ENCODE measurements at regions of chr6 and their contacts with region 1.

Region 1: DNA sequence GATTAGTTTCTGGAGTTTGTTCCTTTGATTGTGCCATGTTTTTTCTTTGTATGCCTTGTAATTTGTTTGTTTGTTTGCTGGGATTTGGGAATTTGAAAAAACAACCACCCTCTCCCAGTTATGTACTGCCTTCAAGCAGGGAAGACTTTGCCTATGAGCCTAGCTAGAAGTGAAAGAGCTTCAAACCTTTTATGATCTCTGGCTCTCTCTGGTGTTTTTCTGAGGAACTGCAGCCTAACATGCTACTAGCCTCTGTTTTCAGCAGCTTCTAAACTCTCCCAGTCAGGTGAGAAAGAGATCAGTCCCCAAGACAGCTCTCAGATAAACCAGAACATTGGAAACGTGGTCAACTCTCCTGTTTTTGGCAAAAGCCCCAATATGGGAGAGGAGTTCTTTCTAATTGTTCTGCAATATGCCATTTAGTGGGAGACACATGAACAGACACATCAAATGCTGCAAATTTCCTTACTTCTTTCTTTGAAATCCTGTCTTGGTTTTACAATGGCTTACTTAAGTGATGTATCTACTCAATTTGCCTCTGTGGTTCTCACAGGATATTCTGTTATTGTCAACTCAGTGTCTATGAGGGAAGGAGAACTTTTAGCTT is 58.9 kb upstream of the SERINC1 start:
- DNase-seq: peak; percentile 69
- ATAC-seq: peak; percentile 95
- H3K4me3 Mint-ChIP-seq: no peak overlapping the region
- H3K27ac Mint-ChIP-seq: no peak overlapping the region
- H3K4me1 Mint-ChIP-seq: no peaks in the 10 kb centered on the region
- H3K27me3 Mint-ChIP-seq: peaks cover 10% of the 10 kb centered on the region
- CTCF ChIP-seq: peak; percentile 87

Region 2: GRCh38 chr6:122381497-122382265 is 148.9 kb before region 1 on chr6:
- CTCF ChIA-PET with region 1: interaction called, 103 read pairs
- POLR2A ChIA-PET with region 1: no interaction called
- intact Hi-C with region 1: loop called (anchors 1 kb)
- DNase-seq: peak; percentile 75
- ATAC-seq: peak; percentile 94
- H3K4me3 Mint-ChIP-seq: no peak overlapping the region
- H3K27ac Mint-ChIP-seq: no peak overlapping the region
- H3K4me1 Mint-ChIP-seq: peaks cover 4% of the 10 kb centered on the region
- H3K27me3 Mint-ChIP-seq: peaks cover 4% of the 10 kb centered on the region
- CTCF ChIP-seq: peak; percentile 72

Region 3: DNA sequence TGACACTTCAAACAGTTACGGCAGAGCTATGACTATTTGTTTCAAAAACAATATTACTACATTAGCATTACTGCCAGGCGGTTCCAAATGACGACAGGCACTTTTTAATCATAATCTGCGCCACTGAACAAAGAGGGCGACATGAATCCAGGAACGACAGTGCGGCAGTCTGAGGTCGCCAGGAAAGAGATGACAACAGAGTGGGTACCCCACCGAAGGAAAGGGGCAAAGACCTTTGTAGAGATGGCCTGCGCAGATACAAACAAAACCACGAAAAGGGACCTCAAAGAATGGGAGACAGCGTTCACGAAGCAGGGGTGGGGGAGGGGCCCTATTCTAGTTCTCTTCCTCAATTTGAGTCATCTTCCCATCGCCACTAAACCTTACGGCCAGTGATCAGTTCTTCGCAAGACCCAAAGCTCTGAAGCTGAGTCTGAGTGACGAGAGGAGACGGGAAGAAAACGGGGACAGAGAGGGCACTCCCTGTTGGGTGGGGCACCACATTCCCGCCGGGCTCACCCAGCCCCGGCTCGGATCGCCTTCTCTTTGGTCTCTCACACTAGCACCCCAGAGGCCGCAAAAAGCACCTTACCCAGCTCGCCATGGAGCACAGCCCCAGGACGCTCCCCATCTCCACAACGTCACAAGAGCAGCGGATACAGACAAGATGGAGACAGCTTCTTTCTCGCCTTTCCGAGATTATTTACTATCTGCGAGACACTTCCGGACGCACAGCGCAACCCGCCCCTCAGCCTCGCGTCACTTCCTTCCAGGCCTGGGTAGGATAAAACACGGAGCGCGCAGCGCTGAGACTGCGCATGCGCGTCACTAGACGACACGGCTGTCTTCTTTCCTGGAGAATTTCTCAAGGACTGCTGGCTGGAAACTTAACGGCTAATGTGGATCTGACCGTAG is 59.2 kb before region 1 on chr6 and contains the start of gene SERINC1:
- CTCF ChIA-PET with region 1: interaction called, 31 read pairs
- POLR2A ChIA-PET with region 1: no interaction called
- intact Hi-C with region 1: loop called (anchors 2 kb)
- DNase-seq: peak; percentile 96
- ATAC-seq: peak; percentile 98
- H3K4me3 Mint-ChIP-seq: peak within 1 kb of the TSS; percentile 94
- H3K27ac Mint-ChIP-seq: peak within 1 kb of the TSS; percentile 98
- H3K4me1 Mint-ChIP-seq: peaks cover 36% of the 10 kb centered on the region
- H3K27me3 Mint-ChIP-seq: no peaks in the 10 kb centered on the region
- CTCF ChIP-seq: no peak
- total RNA-seq, gene SERINC1: 40.2 to 40.5 TPM

Region 4: DNA sequence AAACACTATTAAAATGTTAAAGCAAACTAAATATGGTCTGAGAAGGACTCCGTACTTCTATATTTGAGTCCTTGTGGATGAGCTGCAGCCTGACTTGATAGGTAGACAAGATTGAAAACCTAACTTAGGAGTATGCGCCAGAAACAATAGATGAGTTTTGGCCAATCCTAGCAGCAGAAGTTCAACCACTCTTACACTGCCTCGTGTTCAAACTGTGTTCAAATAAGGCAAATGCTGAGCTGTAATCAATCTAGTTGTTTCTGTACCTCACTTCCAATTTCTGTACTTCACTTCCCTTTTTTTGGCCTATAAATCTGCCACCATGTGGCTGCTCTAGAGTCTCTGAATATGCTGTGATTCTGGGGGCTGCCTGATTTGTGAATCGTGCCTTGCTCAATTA is 45.8 kb before region 1 on chr6:
- CTCF ChIA-PET with region 1: interaction called, 242 read pairs
- POLR2A ChIA-PET with region 1: no interaction called
- intact Hi-C with region 1: no loop called
- DNase-seq: no peak
- ATAC-seq: no peak
- H3K4me3 Mint-ChIP-seq: no peak overlapping the region
- H3K27ac Mint-ChIP-seq: no peak overlapping the region
- H3K4me1 Mint-ChIP-seq: no peaks in the 10 kb centered on the region
- H3K27me3 Mint-ChIP-seq: no peaks in the 10 kb centered on the region
- CTCF ChIP-seq: no peak

Region 5: DNA sequence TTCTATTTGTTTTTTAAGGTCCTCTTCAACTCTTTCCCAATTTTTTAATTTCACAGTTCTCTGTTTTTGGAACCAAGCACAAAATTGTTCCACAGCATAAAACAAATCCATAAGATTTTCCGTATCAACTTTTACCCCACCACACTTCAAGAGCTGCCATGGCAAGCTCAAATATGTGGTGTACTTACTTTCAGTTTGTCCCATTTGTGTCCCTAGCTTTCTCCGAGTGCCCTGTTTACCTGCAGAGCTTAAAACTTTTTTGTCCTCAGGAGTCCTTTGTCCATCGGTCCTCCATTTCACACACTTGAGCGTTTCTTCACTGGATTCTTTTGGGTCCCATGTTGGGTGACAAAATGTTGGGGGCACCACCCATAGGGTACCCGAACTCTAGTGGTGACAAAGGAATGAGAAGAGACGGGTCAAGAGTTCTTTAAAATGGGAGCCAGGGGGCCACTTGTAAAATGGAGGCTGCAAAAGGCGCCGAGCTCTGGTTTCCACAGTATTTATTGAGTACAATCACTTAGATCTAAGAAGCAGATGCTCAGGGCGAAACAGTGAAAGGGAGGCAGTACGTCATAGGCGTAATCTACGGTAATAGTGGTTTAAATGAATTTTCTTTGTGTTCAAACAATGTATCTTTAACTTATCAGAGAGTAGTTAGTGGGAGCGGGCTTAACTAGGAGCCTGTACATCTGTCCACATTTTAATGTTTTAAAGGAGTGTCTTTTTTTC is 19.2 kb before region 1 on chr6:
- CTCF ChIA-PET with region 1: interaction called, 17 read pairs
- POLR2A ChIA-PET with region 1: no interaction called
- intact Hi-C with region 1: no loop called
- DNase-seq: no peak
- ATAC-seq: no peak
- H3K4me3 Mint-ChIP-seq: no peak overlapping the region
- H3K27ac Mint-ChIP-seq: no peak overlapping the region
- H3K4me1 Mint-ChIP-seq: no peaks in the 10 kb centered on the region
- H3K27me3 Mint-ChIP-seq: no peaks in the 10 kb centered on the region
- CTCF ChIP-seq: no peak

Region 6: DNA sequence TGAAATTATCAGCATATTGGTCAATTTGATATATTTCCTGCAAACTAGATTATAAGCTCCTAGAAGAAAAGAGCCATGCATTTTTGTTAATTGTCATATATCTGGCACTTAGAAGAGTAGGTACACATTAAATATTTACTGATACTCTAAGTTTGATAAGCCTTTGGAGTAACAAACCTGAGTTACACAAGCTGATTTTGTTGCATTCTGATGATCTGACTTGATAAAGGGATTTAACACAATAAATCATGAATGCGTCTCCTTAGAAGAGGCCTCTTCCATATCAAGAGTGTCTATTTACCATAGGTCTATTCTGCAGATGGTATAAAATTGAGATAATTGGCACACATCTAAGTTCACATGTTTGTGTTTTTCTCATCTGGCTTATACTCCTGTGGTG is 10.4 kb before region 1 on chr6:
- CTCF ChIA-PET with region 1: interaction called, 27 read pairs
- POLR2A ChIA-PET with region 1: interaction called, 4 read pairs
- intact Hi-C with region 1: no loop called
- DNase-seq: no peak
- ATAC-seq: no peak
- H3K4me3 Mint-ChIP-seq: no peak overlapping the region
- H3K27ac Mint-ChIP-seq: no peak overlapping the region
- H3K4me1 Mint-ChIP-seq: no peaks in the 10 kb centered on the region
- H3K27me3 Mint-ChIP-seq: peaks cover 1% of the 10 kb centered on the region
- CTCF ChIP-seq: no peak

Region 7: GRCh38 chr6:122591616-122592015 is 61.1 kb after region 1 on chr6:
- CTCF ChIA-PET with region 1: no interaction called
- POLR2A ChIA-PET with region 1: no interaction called
- intact Hi-C with region 1: no loop called
- DNase-seq: no peak
- ATAC-seq: no peak
- H3K4me3 Mint-ChIP-seq: no peak overlapping the region
- H3K27ac Mint-ChIP-seq: no peak overlapping the region
- H3K4me1 Mint-ChIP-seq: no peaks in the 10 kb centered on the region
- H3K27me3 Mint-ChIP-seq: no peaks in the 10 kb centered on the region
- CTCF ChIP-seq: no peak

Measured in activated CD8-positive, alpha-beta T cell treated with anti-CD3 and anti-CD28 coated beads for 36 hours (primary cell).